ENCODE measurements at regions of chr6 and their contacts with region 1.

Region 1: GRCh38 chr6:30914076-30914853 is at the start of gene VARS2:
- DNase-seq: peak; percentile 87 to 98 (median 92)
- H3K4me3 ChIP-seq: peak within 1 kb of the TSS; percentile 53 to 96 (median 73)
- H3K27ac ChIP-seq: peak within 1 kb of the TSS; percentile 58 to 100 (median 96)
- H3K27me3 ChIP-seq: no peaks in the 10 kb centered on the region
- CTCF ChIP-seq: peak; percentile 25 to 85 (median 64)
- total RNA-seq, gene VARS2: 27.9 to 82.8 (median 48.0) TPM

Region 2: GRCh38 chr6:30828027-30828960 is 86.0 kb before region 1 on chr6:
- intact Hi-C with region 1: loop called (anchors 2 kb)
- DNase-seq: peak; percentile 80 to 91 (median 87)
- H3K4me3 ChIP-seq: peak overlapping the region in 18 of 59 donors; percentile 4 to 50 (median 19)
- H3K27ac ChIP-seq: peak overlapping the region in 50 of 59 donors; percentile 3 to 86 (median 64)
- H3K27me3 ChIP-seq: no peaks in the 10 kb centered on the region
- CTCF ChIP-seq: peak; percentile 75 to 99 (median 96)

Region 3: GRCh38 chr6:30883685-30884520 is 30.4 kb before region 1 on chr6 and contains the start of gene DDR1:
- intact Hi-C with region 1: loop called (anchors 2 to 5 kb)
- DNase-seq: peak; percentile 68 to 90 (median 78)
- H3K4me3 ChIP-seq: peak within 1 kb of the TSS; percentile 52 to 90 (median 79)
- H3K27ac ChIP-seq: peak within 1 kb of the TSS; percentile 85 to 99 (median 96)
- H3K27me3 ChIP-seq: no peaks in the 10 kb centered on the region
- CTCF ChIP-seq: peak in 1 of 56 donors; percentile 19
- total RNA-seq, gene DDR1: 100 to 498 (median 195) TPM

Region 4: GRCh38 chr6:31042806-31043205 is 128.5 kb after region 1 on chr6:
- intact Hi-C with region 1: no loop called
- DNase-seq: peak in 2 of 10 donors; percentile 21 to 32
- H3K4me3 ChIP-seq: peak overlapping the region in 1 of 59 donors; percentile 10
- H3K27ac ChIP-seq: peak overlapping the region in 7 of 59 donors; percentile 18 to 49 (median 29)
- H3K27me3 ChIP-seq: no peaks in the 10 kb centered on the region
- CTCF ChIP-seq: peak in 42 of 56 donors; percentile 9 to 53 (median 32)

Region 5: DNA sequence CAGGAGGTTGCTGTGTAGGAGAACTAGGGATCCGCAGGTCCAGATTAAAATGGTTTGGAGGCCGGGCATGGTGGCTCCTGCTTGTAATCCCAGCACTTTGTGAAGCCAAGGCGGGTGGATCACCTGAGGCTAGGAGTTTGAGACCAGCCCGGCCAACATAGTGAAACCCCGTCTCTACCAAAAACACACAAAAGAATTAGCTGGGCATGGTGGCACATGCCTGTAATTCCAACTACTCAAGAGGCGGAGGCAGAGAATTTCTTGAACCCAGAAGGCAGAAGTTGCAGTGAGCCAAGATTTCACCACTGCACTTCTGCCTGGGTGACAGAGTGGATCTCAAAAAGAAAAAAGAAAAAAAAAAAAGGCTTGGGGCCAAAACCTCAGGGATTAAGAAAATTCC is 167.6 kb after region 1 on chr6:
- intact Hi-C with region 1: loop called (anchors 1 kb)
- DNase-seq: no peak
- H3K4me3 ChIP-seq: no peak overlapping the region
- H3K27ac ChIP-seq: no peak overlapping the region
- H3K27me3 ChIP-seq: no peaks in the 10 kb centered on the region
- CTCF ChIP-seq: no peak

Region 6: DNA sequence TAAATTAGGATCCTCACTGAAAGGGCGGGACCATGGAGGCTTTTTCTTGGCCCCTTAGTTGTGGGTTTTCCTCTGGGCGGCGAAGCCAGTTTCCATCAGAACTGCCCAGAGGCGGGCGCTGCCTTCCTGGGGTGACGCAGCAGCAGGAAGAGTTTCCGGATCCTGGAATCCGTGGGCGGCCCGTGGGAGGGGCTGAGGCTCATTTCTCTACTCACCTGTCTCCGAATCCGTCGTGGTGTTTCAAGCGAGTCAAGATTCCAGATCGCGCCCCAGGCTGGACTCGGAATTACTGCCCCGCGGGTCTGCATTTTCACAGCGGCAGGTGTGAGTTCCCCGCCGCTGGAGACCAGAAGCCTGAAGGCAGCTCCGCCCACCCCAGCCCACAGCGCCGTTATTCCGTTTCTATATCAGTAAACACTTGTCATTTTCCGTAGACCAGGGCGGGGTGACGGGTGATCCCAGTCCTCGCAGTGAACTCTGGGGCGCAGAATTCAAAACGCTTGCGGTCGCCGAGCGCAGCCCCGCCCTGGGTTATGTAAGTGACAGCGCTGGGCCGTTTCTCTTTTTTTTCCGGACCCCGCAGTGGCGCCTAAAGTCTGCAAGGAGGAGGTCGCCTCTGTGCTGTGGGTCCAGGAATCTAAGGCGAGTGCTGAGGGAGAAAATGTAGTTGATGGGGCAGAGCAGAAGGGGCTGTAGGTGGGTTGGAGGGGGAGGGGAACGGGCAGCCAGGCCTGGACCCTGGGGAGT is 283.5 kb after region 1 on chr6:
- intact Hi-C with region 1: loop called in 1 of 2 experiments (anchors 10 kb)
- DNase-seq: peak; percentile 66 to 91 (median 84)
- H3K4me3 ChIP-seq: peak overlapping the region; percentile 48 to 95 (median 78)
- H3K27ac ChIP-seq: peak overlapping the region; percentile 58 to 99 (median 95)
- H3K27me3 ChIP-seq: no peaks in the 10 kb centered on the region
- CTCF ChIP-seq: peak in 7 of 56 donors; percentile 0 to 12 (median 10)

Region 7: GRCh38 chr6:31239854-31240253 is 325.6 kb after region 1 on chr6:
- intact Hi-C with region 1: no loop called
- DNase-seq: no peak
- H3K4me3 ChIP-seq: no peak overlapping the region
- H3K27ac ChIP-seq: no peak overlapping the region
- H3K27me3 ChIP-seq: peaks cover 0 to 7% (median 0%) of the 10 kb centered on the region in 45 donors
- CTCF ChIP-seq: no peak